ENCODE measurements at regions of chr6 and their contacts with region 1.

Region 1: DNA sequence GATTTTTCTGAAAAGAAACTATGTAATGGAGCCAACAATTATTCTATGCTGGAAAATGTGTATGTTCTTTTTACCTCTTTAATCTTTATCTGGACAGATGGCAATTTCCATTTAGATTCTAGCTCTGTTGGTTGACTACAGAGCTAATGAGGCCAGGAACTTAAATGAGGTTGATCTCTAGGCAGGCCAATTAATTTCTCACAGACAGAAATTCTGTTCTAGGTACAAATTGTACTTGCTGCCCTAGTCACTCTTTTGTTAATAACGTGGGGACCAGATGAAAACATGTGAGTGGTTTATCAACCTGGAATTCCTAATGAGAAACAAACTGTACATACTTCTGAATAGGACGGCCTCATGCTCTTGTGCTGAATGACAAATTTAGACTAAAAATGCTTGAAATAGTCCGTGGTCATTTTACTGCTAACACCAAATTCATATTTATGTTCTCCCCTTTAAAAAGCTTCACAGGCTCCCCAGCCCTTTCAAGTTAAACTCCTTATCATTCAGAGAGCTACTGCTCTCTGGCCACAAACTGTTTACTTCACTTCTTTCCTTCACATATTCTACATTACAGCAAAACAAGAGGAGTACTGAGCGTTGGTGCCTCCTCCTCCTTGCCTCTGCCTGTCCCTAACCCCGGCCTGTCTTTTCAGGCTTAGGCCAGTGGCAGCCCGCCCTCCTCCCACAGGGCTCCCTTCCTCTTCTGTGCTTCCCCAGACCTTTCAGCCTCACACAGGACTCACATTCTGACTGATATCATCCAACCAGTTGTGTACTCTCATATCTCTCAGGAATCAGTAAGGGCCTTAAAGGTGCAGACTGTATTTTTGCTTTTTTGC is 41.4 kb downstream of the DTNBP1 start:
- DNase-seq: peak; percentile 30
- ATAC-seq: peak; percentile 72
- H3K4me3 ChIP-seq: no peak overlapping the region
- H3K27ac ChIP-seq: no peak overlapping the region
- H3K4me1 ChIP-seq: peaks cover 7% of the 10 kb centered on the region
- H3K27me3 ChIP-seq: no peaks in the 10 kb centered on the region
- CTCF ChIP-seq: no peak
- POLR2A ChIP-seq: no peak
- RAD21 ChIP-seq: no peak

Region 2: DNA sequence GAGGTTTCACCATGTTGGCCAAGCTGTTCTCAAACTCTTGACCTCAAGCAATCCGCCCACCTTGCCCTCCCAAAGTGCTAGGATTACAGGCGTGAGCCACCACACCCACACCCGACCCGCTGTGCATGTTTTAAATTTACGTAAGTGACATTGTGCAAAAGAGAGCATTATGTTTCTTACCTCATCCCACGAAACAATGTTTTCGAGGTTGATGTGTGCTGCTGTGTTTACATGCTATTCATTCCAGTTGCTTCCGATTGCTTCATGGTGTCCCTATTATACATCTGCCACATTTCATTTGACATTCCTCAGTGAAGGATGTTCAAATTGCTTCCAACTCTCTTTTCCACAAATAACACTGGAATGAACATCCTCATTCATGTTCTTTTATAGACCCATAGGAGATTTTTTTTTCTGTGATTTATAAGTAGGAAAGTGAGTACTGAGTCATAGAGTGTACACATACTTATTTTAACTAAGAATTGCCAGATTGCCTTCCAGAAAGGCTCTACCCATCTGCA is 779.5 kb before region 1 on chr6:
- CTCF ChIA-PET with region 1: no interaction called
- POLR2A ChIA-PET with region 1: no interaction called
- dilution Hi-C with region 1: no loop called
- in situ Hi-C with region 1: no loop called
- intact Hi-C with region 1: loop called (anchors 10 kb)
- DNase-seq: peak; percentile 100
- ATAC-seq: peak; percentile 91
- H3K4me3 ChIP-seq: no peak overlapping the region
- H3K27ac ChIP-seq: peak overlapping the region; percentile 59; the same call in 1 of the 2 replicates
- H3K4me1 ChIP-seq: peaks cover 7% of the 10 kb centered on the region
- H3K27me3 ChIP-seq: no peaks in the 10 kb centered on the region
- CTCF ChIP-seq: no peak
- POLR2A ChIP-seq: no peak
- RAD21 ChIP-seq: peak; percentile 12

Region 3: DNA sequence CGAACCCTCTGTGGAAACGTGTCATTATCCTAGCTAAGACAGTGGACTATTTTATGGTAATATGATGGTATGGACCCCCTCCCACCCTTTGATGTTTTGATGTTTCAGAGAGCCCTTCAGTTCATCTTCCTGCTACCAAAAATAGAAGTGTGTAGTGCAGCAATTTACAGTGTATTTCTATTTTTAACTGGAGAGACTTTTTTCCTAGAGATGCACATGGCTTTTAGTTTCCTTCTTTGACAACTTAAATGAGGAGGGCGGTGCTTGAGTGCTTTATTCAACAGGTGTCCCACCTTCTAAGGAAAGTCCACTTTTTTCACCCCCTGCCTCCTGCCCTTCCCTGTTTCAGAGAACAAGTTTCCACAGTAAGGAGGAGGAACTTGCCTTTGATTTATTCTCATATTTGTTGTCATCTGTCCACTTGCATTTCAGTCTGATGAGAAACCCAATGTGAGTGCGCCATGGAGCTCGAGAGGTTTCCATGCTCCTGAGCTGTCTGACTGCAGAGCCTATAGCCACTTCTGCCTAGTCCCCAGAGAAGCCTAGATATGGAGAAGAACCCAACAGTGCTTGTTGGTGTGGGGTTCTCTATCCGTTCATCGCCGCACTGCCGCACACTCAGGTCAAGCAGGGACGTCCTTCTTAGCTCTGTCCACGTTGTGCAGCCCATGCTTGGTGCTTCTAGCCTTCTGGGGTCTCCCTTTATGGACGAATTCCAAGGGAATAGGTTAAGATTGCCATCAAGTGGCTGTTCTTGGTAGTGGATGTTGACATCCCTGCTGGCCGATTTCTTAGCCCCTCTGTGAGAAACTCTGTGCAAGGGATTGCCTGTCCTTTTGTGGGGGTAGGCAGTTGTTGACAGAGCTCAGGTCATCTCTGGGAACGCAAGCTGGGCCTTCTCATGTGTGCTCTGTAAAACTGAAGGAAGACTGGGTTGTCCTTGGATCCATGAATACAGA is 231.4 kb before region 1 on chr6:
- CTCF ChIA-PET with region 1: no interaction called
- POLR2A ChIA-PET with region 1: no interaction called
- dilution Hi-C with region 1: no loop called
- in situ Hi-C with region 1: no loop called
- intact Hi-C with region 1: loop called (anchors 2 kb)
- DNase-seq: peak; percentile 66
- ATAC-seq: peak; percentile 73
- H3K4me3 ChIP-seq: no peak overlapping the region
- H3K27ac ChIP-seq: no peak overlapping the region
- H3K4me1 ChIP-seq: peaks cover 28% of the 10 kb centered on the region
- H3K27me3 ChIP-seq: no peaks in the 10 kb centered on the region
- CTCF ChIP-seq: peak; percentile 69
- POLR2A ChIP-seq: no peak
- RAD21 ChIP-seq: peak; percentile 86

Region 4: DNA sequence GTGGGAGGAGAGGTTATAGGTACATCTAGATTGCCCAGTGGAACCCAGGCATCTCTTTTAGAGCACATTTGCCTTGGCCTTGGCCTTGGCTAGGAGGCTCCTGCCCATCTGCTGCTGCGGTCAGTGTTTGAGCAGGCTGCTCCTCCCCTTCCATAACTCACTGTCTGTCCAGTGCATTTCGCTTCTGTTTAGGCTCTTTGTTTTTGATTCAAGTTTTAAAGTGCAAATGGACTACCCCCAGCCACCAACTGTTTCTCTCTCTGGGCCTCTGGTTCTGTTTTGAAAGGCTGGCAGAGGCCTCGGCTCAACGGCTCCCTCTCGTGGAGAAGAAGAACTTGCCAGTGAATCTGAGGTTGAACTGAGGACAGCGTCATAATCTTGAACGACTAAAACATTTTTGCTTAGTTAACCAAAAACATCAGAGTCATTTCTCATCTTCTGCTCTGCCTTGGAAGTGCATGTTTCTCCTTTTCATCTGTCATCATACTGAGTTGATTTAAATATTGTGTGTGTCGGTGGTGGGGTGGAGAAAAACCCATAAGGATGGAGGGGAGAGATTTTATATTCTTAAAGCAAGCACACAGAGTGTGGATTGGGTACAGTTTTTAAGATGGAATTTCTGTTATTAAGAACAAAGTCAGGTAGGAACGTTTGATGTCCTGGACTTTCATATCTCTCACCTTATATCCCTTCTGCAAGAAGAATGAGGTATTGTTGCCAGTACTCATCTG is 130.0 kb before region 1 on chr6:
- CTCF ChIA-PET with region 1: no interaction called
- POLR2A ChIA-PET with region 1: no interaction called
- dilution Hi-C with region 1: no loop called
- in situ Hi-C with region 1: no loop called
- intact Hi-C with region 1: loop called (anchors 2 kb)
- DNase-seq: peak; percentile 78
- ATAC-seq: peak; percentile 91
- H3K4me3 ChIP-seq: no peak overlapping the region
- H3K27ac ChIP-seq: peak overlapping the region; percentile 30; the same call in 1 of the 2 replicates
- H3K4me1 ChIP-seq: peaks cover 13% of the 10 kb centered on the region
- H3K27me3 ChIP-seq: no peaks in the 10 kb centered on the region
- CTCF ChIP-seq: peak; percentile 91
- POLR2A ChIP-seq: no peak
- RAD21 ChIP-seq: peak; percentile 90